MCF 10A (cell line): ENCODE measurements at regions of chr10 and their contacts with region 1.

Region 1: GRCh38 chr10:132223156-132223590 is 36.4 kb downstream of the DPYSL4 start:
- DNase-seq: peak; percentile 79
- H3K4me3 Mint-ChIP-seq: no peak overlapping the region
- H3K27ac Mint-ChIP-seq: no peak overlapping the region
- H3K4me1 Mint-ChIP-seq: no peaks in the 10 kb centered on the region
- H3K27me3 Mint-ChIP-seq: no peaks in the 10 kb centered on the region
- CTCF ChIP-seq: peak; percentile 90

Region 2: GRCh38 chr10:132307823-132308587 is 84.8 kb after region 1 on chr10 and contains the start of gene STK32C:
- CTCF ChIA-PET with region 1: no interaction called
- POLR2A ChIA-PET with region 1: no interaction called
- intact Hi-C with region 1: loop called (anchors 1 kb)
- DNase-seq: peak; percentile 88
- H3K4me3 Mint-ChIP-seq: peak within 1 kb of the TSS; percentile 83
- H3K27ac Mint-ChIP-seq: no peak within 1 kb of the TSS
- H3K4me1 Mint-ChIP-seq: no peaks in the 10 kb centered on the region
- H3K27me3 Mint-ChIP-seq: no peaks in the 10 kb centered on the region
- CTCF ChIP-seq: no peak
- total RNA-seq, gene STK32C: 20.7 and 21.2 TPM in 2 replicates

Region 3: GRCh38 chr10:132354356-132355094 is 131.4 kb after region 1 on chr10:
- CTCF ChIA-PET with region 1: interaction called, 14 read pairs
- POLR2A ChIA-PET with region 1: no interaction called
- intact Hi-C with region 1: loop called (anchors 1 kb)
- DNase-seq: no peak
- H3K4me3 Mint-ChIP-seq: no peak overlapping the region
- H3K27ac Mint-ChIP-seq: no peak overlapping the region
- H3K4me1 Mint-ChIP-seq: no peaks in the 10 kb centered on the region
- H3K27me3 Mint-ChIP-seq: no peaks in the 10 kb centered on the region
- CTCF ChIP-seq: no peak

Region 4: GRCh38 chr10:132452631-132453469 is 229.7 kb after region 1 on chr10:
- CTCF ChIA-PET with region 1: interaction called, 4 read pairs
- POLR2A ChIA-PET with region 1: no interaction called
- intact Hi-C with region 1: loop called (anchors 1 kb)
- DNase-seq: peak; percentile 73
- H3K4me3 Mint-ChIP-seq: peak overlapping the region; percentile 6
- H3K27ac Mint-ChIP-seq: no peak overlapping the region
- H3K4me1 Mint-ChIP-seq: peaks cover 11% of the 10 kb centered on the region
- H3K27me3 Mint-ChIP-seq: no peaks in the 10 kb centered on the region
- CTCF ChIP-seq: peak; percentile 98